ENCODE measurements at regions of chr12 and their contacts with region 1.

Region 1: DNA sequence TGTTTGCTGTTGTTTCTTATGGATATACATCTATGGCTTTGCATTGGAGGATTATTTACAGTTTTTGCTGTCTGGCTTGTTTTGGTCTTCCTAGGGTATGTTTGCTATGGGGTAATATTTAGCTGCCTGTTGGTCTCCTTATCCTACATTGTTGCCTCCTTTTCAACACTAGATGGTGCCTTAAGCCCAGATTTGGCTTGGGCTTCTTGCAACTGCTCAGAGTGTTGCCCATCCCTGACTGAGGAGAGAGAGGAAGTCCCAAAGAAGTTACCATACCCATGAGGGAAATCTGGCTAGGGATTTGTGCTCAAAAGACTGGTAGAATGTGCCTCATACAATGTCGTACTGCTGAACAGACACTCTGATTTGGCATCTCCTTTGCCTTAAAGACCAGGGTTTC is 94.6 kb upstream of the MUCL1 start:
- H3K4me3 ChIP-seq: no peak overlapping the region
- H3K27ac ChIP-seq: no peak overlapping the region
- H3K4me1 ChIP-seq: no peaks in the 10 kb centered on the region
- CTCF ChIP-seq: peak; percentile 59

Region 2: GRCh38 chr12:54749191-54749818 is 10.4 kb before region 1 on chr12:
- CTCF ChIA-PET with region 1: interaction called, 34 read pairs
- POLR2A ChIA-PET with region 1: no interaction called
- H3K4me3 ChIP-seq: no peak overlapping the region
- H3K27ac ChIP-seq: no peak overlapping the region
- H3K4me1 ChIP-seq: no peaks in the 10 kb centered on the region
- CTCF ChIP-seq: peak; percentile 45; the same call in 1 of the 2 replicates

Region 3: DNA sequence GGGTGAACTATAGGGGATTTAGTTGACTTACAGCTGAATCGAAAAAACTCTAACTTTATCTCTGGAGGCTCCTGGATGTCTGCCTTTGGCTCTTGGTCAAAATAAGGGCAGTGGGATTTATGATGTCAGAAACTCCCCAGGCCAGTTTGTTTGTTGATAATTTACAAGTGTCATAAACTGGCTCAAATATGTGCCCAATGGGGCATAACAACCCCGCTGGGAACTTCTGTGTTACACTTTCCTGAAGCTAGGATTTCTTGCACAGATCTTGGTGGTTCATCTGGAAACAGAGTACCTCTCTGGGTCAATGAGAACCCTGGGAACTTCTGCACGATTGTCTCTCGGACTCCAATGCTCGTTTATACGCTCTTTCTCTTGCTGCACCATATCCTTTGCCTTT is 35.9 kb after region 1 on chr12:
- CTCF ChIA-PET with region 1: no interaction called
- POLR2A ChIA-PET with region 1: no interaction called
- H3K4me3 ChIP-seq: no peak overlapping the region
- H3K27ac ChIP-seq: no peak overlapping the region
- H3K4me1 ChIP-seq: no peaks in the 10 kb centered on the region
- CTCF ChIP-seq: no peak